ENCODE measurements at regions of chr9 and their contacts with region 1.

Region 1: GRCh38 chr9:23194281-23194680 is 631.8 kb downstream of the ELAVL2 start:
- DNase-seq: no peak
- ATAC-seq: no peak
- H3K4me3 ChIP-seq: no peak overlapping the region
- H3K27ac ChIP-seq: no peak overlapping the region
- H3K4me1 ChIP-seq: no peaks in the 10 kb centered on the region
- H3K27me3 ChIP-seq: no peaks in the 10 kb centered on the region
- CTCF ChIP-seq: no peak
- POLR2A ChIP-seq: no peak
- RAD21 ChIP-seq: no peak

Region 2: GRCh38 chr9:23044549-23044948 is 149.7 kb before region 1 on chr9:
- CTCF ChIA-PET with region 1: no interaction called
- POLR2A ChIA-PET with region 1: no interaction called
- dilution Hi-C with region 1: no loop called
- in situ Hi-C with region 1: no loop called
- intact Hi-C with region 1: loop called (anchors 10 kb)
- DNase-seq: peak; percentile 26
- ATAC-seq: no peak
- H3K4me3 ChIP-seq: no peak overlapping the region
- H3K27ac ChIP-seq: no peak overlapping the region
- H3K4me1 ChIP-seq: no peaks in the 10 kb centered on the region
- H3K27me3 ChIP-seq: no peaks in the 10 kb centered on the region
- CTCF ChIP-seq: no peak
- POLR2A ChIP-seq: no peak
- RAD21 ChIP-seq: no peak

Region 3: DNA sequence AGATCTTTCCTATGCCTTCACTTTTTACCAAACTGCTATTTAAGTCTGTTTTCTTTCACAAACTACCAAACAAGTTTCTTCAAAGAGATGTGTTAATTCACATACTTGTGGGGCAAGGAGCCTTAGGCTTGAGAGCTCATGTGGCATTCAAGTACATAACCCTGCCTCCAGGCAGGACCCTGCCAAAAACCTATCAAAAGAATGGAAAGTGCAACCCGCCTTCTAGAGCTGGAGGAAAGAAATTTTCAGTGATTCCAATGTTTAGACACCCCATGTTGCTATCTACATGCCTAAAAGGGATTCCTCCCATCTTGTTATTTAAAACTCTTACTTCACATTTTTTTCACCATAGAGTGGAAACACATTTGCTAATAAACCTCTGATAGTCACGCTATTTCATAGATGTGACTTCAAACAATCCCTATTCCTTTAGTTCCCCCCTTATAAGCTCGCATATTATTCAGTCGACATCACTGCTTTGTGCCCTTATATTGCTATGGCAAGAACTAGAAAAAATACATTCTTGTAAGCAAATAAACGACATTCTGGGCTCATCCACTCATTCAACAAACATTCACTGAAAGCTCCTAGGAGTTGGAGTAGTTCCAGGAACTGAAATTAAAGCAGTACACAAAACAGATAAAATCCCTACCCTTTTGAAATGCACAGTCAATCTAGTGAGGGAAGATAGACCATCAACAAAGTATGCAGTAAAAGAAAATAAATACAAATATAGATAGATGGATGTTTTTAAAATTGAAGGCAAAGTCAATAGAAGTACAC is 113.6 kb after region 1 on chr9:
- CTCF ChIA-PET with region 1: no interaction called
- POLR2A ChIA-PET with region 1: no interaction called
- dilution Hi-C with region 1: no loop called
- in situ Hi-C with region 1: no loop called
- intact Hi-C with region 1: no loop called
- DNase-seq: no peak
- ATAC-seq: no peak
- H3K4me3 ChIP-seq: no peak overlapping the region
- H3K27ac ChIP-seq: no peak overlapping the region
- H3K4me1 ChIP-seq: no peaks in the 10 kb centered on the region
- H3K27me3 ChIP-seq: no peaks in the 10 kb centered on the region
- CTCF ChIP-seq: no peak
- POLR2A ChIP-seq: no peak
- RAD21 ChIP-seq: no peak

Measured in IMR-90 (cell line).